Endothelial cell of umbilical vein (primary cell): ENCODE measurements at regions of chr1 and their contacts with region 1.

Region 1: DNA sequence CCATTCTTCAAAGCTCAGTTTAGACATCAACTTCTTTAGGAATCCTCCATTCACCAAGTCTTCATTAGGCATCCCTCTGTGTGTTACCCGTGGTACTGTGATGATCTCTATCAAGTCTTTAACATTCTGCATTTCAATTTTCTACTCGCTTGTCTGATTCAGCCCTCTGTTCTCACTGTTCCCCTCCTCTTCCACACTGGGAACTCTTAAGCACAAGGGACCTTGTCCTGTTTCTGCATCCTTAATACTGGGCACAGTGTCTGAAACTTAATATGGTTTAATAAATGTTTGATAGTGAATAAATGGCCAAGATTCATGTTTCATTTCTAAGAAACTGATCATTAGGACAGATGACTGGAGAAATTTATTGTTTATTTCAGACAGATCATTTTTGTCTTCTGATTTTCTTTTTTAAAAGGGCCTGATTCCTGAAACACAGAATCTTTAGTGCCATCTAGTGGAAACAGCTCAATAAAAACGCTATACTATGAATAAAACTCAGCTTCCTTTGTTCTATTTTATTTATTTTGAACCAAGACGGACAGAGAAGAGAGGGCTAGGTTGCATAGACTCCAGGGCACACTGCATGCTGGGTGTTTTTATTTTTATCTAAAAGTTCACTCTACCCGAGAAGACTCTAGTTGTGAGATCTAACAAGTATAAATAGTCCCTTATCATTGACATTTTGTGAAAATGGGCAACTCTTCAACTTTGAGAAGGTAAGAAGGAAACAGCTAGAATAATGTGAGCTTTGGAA is 7.0 kb upstream of the TRIM45 start:
- DNase-seq: peak; percentile 68
- H3K4me3 ChIP-seq: no peak overlapping the region
- H3K27ac ChIP-seq: no peak overlapping the region
- H3K4me1 ChIP-seq: no peaks in the 10 kb centered on the region
- H3K27me3 ChIP-seq: peaks cover 11 to 25% of the 10 kb centered on the region in 2 experiments
- CTCF ChIP-seq: peak; percentile 36 to 37
- POLR2A ChIP-seq: no peak

Region 2: DNA sequence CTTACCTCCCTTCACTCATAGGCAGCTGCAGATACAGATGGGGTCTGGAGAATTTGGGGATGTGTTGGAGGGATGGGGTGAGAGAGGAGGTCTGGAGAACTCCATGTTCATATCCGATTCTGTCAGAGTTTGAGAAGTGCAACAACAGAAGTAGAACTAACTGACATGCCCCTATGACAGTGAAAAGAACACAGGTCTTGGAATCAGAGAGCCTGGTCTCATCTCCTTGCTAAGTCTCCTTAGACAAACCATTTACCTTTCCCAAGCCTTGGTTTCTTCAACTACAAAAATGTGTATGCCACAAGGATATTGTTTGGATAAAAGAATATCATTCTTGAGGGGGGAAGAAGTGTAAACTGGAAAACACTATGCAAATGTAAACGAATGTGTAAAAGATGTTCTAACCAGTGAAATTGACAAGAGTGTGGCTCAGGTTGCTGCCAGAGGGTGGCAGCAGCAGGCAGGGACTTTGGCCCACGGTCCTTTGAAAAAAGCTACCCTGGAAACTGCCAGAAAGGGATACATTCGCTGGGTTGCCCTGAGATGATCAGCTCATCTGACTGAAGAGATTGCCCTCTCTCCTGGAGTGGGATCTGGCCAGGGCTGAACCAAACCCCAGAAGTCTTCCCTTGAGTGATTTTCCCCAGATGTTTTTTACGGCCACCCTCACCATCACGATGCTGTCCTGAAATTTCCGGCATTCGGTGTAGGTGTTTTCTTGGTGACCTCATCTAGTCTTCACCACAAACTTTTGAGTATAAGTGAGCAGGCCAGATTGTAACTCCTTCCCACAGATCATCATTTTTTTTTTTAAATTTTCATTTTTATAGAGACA is 391.3 kb before region 1 on chr1:
- CTCF ChIA-PET with region 1: interaction called, 17 read pairs
- POLR2A ChIA-PET with region 1: no interaction called
- dilution Hi-C with region 1: no loop called
- intact Hi-C with region 1: loop called (anchors 5 kb)
- DNase-seq: peak; percentile 60
- H3K4me3 ChIP-seq: no peak overlapping the region
- H3K27ac ChIP-seq: no peak overlapping the region
- H3K4me1 ChIP-seq: no peaks in the 10 kb centered on the region
- H3K27me3 ChIP-seq: peaks cover 0 to 2% of the 10 kb centered on the region in 2 experiments
- CTCF ChIP-seq: peak; percentile 77 to 80
- POLR2A ChIP-seq: no peak

Region 3: DNA sequence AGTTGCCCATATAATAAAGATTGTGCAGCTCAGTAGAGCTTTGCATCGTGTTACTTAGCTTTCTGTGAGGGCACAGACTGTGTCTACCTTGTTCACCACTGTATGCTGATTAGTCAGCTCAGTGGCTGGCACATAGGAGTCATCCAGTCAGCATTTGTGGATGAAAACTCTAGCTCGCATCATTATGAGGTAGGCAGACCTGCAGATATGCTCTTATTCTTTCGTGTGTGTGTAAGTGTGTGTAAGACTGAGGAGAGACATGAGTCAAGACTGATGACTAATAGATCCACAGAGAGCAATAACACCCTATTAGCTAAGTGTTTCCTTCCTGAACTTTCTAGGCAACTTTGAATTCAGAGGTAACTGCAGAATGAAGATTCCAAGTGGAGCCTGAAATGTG is 51.2 kb before region 1 on chr1:
- CTCF ChIA-PET with region 1: interaction called, 490 read pairs
- POLR2A ChIA-PET with region 1: no interaction called
- dilution Hi-C with region 1: no loop called
- intact Hi-C with region 1: no loop called
- DNase-seq: peak; percentile 90
- H3K4me3 ChIP-seq: no peak overlapping the region
- H3K27ac ChIP-seq: peak overlapping the region; percentile 36
- H3K4me1 ChIP-seq: peaks cover 13% of the 10 kb centered on the region
- H3K27me3 ChIP-seq: no peaks in the 10 kb centered on the region
- CTCF ChIP-seq: no peak
- POLR2A ChIP-seq: no peak

Region 4: GRCh38 chr1:117110774-117111173 is 17.7 kb before region 1 on chr1:
- CTCF ChIA-PET with region 1: interaction called, 12 read pairs
- POLR2A ChIA-PET with region 1: no interaction called
- dilution Hi-C with region 1: no loop called
- intact Hi-C with region 1: no loop called
- DNase-seq: peak; percentile 25
- H3K4me3 ChIP-seq: no peak overlapping the region
- H3K27ac ChIP-seq: no peak overlapping the region
- H3K4me1 ChIP-seq: peaks cover 10% of the 10 kb centered on the region
- H3K27me3 ChIP-seq: no peaks in the 10 kb centered on the region
- CTCF ChIP-seq: no peak
- POLR2A ChIP-seq: no peak

Region 5: GRCh38 chr1:117284399-117285215 is 156.1 kb after region 1 on chr1:
- CTCF ChIA-PET with region 1: interaction called, 28 read pairs
- POLR2A ChIA-PET with region 1: no interaction called
- dilution Hi-C with region 1: no loop called
- intact Hi-C with region 1: loop called (anchors 2 kb)
- DNase-seq: peak; percentile 39
- H3K4me3 ChIP-seq: no peak overlapping the region
- H3K27ac ChIP-seq: no peak overlapping the region
- H3K4me1 ChIP-seq: no peaks in the 10 kb centered on the region
- H3K27me3 ChIP-seq: peaks cover 0 to 1% of the 10 kb centered on the region in 2 experiments
- CTCF ChIP-seq: peak in 1 of 2 donors; percentile 17
- POLR2A ChIP-seq: no peak